Kidney (tissue), 22 donors: ENCODE measurements at regions of chr2 and their contacts with region 1.

Region 1: GRCh38 chr2:240056678-240057077 is 3.4 kb upstream of the OR6B3 start:
- DNase-seq: no peak
- H3K4me3 ChIP-seq: no peak overlapping the region
- H3K27ac ChIP-seq: no peak overlapping the region
- H3K4me1 ChIP-seq: no peaks in the 10 kb centered on the region
- H3K27me3 ChIP-seq: peaks cover 5% of the 10 kb centered on the region
- CTCF ChIP-seq: no peak

Region 2: GRCh38 chr2:240143801-240144648 is 87.3 kb after region 1 on chr2:
- intact Hi-C with region 1: loop called (anchors 5 kb)
- DNase-seq: peak; percentile 73 to 90 (median 84)
- H3K4me3 ChIP-seq: no peak overlapping the region
- H3K27ac ChIP-seq: no peak overlapping the region
- H3K4me1 ChIP-seq: no peaks in the 10 kb centered on the region
- H3K27me3 ChIP-seq: no peaks in the 10 kb centered on the region
- CTCF ChIP-seq: peak; percentile 91

Region 3: GRCh38 chr2:240155048-240155744 is 98.5 kb after region 1 on chr2:
- intact Hi-C with region 1: no loop called
- DNase-seq: peak in 2 of 5 donors; percentile 24 to 36
- H3K4me3 ChIP-seq: no peak overlapping the region
- H3K27ac ChIP-seq: no peak overlapping the region
- H3K4me1 ChIP-seq: no peaks in the 10 kb centered on the region
- H3K27me3 ChIP-seq: no peaks in the 10 kb centered on the region
- CTCF ChIP-seq: no peak